ENCODE measurements at regions of chr18 and their contacts with region 1.

Region 1: DNA sequence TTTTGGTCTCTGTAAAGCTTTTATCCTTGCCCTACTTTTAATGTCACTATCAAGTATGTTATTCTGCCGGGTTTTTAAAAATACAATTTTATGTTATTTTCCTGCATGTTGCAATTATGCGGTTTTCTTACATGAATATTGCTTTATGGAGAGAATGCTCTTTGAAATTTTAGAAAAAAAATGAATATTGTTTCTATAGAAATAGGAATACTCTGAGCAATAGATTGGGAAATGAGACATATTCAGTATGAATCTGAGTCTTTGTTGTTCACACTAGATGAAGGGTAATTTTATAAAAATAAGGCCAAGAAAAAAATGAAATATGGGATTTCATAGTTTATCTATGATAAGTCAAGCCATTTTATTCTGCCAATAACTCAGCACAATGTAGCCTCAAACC is 142.2 kb upstream of the DTNA start:
- DNase-seq: no peak
- ATAC-seq: no peak
- H3K4me3 ChIP-seq: no peak overlapping the region
- H3K4me3 Mint-ChIP-seq: no peak overlapping the region
- H3K27ac ChIP-seq: no peak overlapping the region
- H3K27ac Mint-ChIP-seq: no peak overlapping the region
- H3K4me1 ChIP-seq: no peaks in the 10 kb centered on the region
- H3K4me1 Mint-ChIP-seq: no peaks in the 10 kb centered on the region
- H3K27me3 ChIP-seq: no peaks in the 10 kb centered on the region
- H3K27me3 Mint-ChIP-seq: no peaks in the 10 kb centered on the region
- CTCF ChIP-seq: no peak

Region 2: GRCh38 chr18:34624551-34624950 is 56.7 kb after region 1 on chr18:
- CTCF ChIA-PET with region 1: no interaction called
- POLR2A ChIA-PET with region 1: no interaction called
- intact Hi-C with region 1: loop called in 1 of 2 experiments (anchors 5 kb)
- DNase-seq: no peak
- ATAC-seq: no peak
- H3K4me3 ChIP-seq: no peak overlapping the region
- H3K4me3 Mint-ChIP-seq: no peak overlapping the region
- H3K27ac ChIP-seq: no peak overlapping the region
- H3K27ac Mint-ChIP-seq: no peak overlapping the region
- H3K4me1 ChIP-seq: no peaks in the 10 kb centered on the region
- H3K4me1 Mint-ChIP-seq: no peaks in the 10 kb centered on the region
- H3K27me3 ChIP-seq: no peaks in the 10 kb centered on the region
- H3K27me3 Mint-ChIP-seq: no peaks in the 10 kb centered on the region
- CTCF ChIP-seq: no peak

Region 3: GRCh38 chr18:34787931-34788532 is 220.2 kb after region 1 on chr18:
- CTCF ChIA-PET with region 1: no interaction called
- POLR2A ChIA-PET with region 1: no interaction called
- intact Hi-C with region 1: no loop called
- DNase-seq: peak in 6 of 14 experiments; percentile 7 to 67 (median 38)
- ATAC-seq: no peak
- H3K4me3 ChIP-seq: no peak overlapping the region
- H3K4me3 Mint-ChIP-seq: no peak overlapping the region
- H3K27ac ChIP-seq: no peak overlapping the region
- H3K27ac Mint-ChIP-seq: no peak overlapping the region
- H3K4me1 ChIP-seq: no peaks in the 10 kb centered on the region
- H3K4me1 Mint-ChIP-seq: no peaks in the 10 kb centered on the region
- H3K27me3 ChIP-seq: no peaks in the 10 kb centered on the region
- H3K27me3 Mint-ChIP-seq: peaks cover 19% of the 10 kb centered on the region
- CTCF ChIP-seq: peak; percentile 80

Measured in CD4-positive, alpha-beta T cell (primary cell).